CD8-positive, alpha-beta memory T cell (primary cell): ENCODE measurements at regions of chr4 and their contacts with region 1.

Region 1: GRCh38 chr4:56977321-56978012 is at the start of gene NOA1:
- DNase-seq: peak; percentile 93 to 99 (median 99)
- H3K4me3 ChIP-seq: peak within 1 kb of the TSS; percentile 89
- H3K4me3 Mint-ChIP-seq: peak within 1 kb of the TSS; percentile 96 to 100 (median 98)
- H3K27ac ChIP-seq: peak within 1 kb of the TSS; percentile 90
- H3K27ac Mint-ChIP-seq: peak within 1 kb of the TSS; percentile 96 to 100 (median 98)
- H3K4me1 ChIP-seq: peaks cover 53% of the 10 kb centered on the region
- H3K4me1 Mint-ChIP-seq: peaks cover 55 to 82% (median 58%) of the 10 kb centered on the region in 3 donors
- H3K27me3 ChIP-seq: no peaks in the 10 kb centered on the region
- H3K27me3 Mint-ChIP-seq: no peaks in the 10 kb centered on the region
- total RNA-seq, gene NOA1: 22.0 TPM

Region 2: GRCh38 chr4:55948726-55949474 is 1028.6 kb before region 1 on chr4 and contains the start of gene CEP135:
- CTCF ChIA-PET with region 1: interaction called, 10 read pairs
- POLR2A ChIA-PET with region 1: no interaction called
- DNase-seq: peak; percentile 88 to 95 (median 91)
- H3K4me3 ChIP-seq: peak within 1 kb of the TSS; percentile 87
- H3K4me3 Mint-ChIP-seq: peak within 1 kb of the TSS; percentile 86 to 97 (median 94)
- H3K27ac ChIP-seq: peak within 1 kb of the TSS; percentile 82
- H3K27ac Mint-ChIP-seq: peak within 1 kb of the TSS; percentile 71 to 98 (median 94)
- H3K4me1 ChIP-seq: peaks cover 29% of the 10 kb centered on the region
- H3K4me1 Mint-ChIP-seq: peaks cover 36 to 53% (median 52%) of the 10 kb centered on the region in 3 donors
- H3K27me3 ChIP-seq: no peaks in the 10 kb centered on the region
- H3K27me3 Mint-ChIP-seq: no peaks in the 10 kb centered on the region
- total RNA-seq, gene CEP135: 15.8 to 16.1 TPM

Region 3: GRCh38 chr4:56387023-56388001 is 590.2 kb before region 1 on chr4 and contains the start of gene AASDH:
- CTCF ChIA-PET with region 1: no interaction called
- POLR2A ChIA-PET with region 1: interaction called, 16 read pairs
- DNase-seq: peak; percentile 88 to 96 (median 94)
- H3K4me3 ChIP-seq: peak within 1 kb of the TSS; percentile 79
- H3K4me3 Mint-ChIP-seq: peak within 1 kb of the TSS; percentile 88 to 99 (median 93)
- H3K27ac ChIP-seq: peak within 1 kb of the TSS; percentile 97
- H3K27ac Mint-ChIP-seq: peak within 1 kb of the TSS; percentile 97 to 99 (median 98)
- H3K4me1 ChIP-seq: peaks cover 24% of the 10 kb centered on the region
- H3K4me1 Mint-ChIP-seq: peaks cover 39 to 50% (median 43%) of the 10 kb centered on the region in 3 donors
- H3K27me3 ChIP-seq: no peaks in the 10 kb centered on the region
- H3K27me3 Mint-ChIP-seq: no peaks in the 10 kb centered on the region
- total RNA-seq, gene AASDH: 8.5 to 13.0 TPM

Region 4: GRCh38 chr4:56907489-56908205 is 69.8 kb before region 1 on chr4 and contains the start of gene REST:
- CTCF ChIA-PET with region 1: interaction called, 51 read pairs
- POLR2A ChIA-PET with region 1: interaction called, 107 read pairs
- DNase-seq: peak; percentile 74 to 88 (median 83)
- H3K4me3 ChIP-seq: peak within 1 kb of the TSS; percentile 77
- H3K4me3 Mint-ChIP-seq: peak within 1 kb of the TSS; percentile 89 to 96 (median 93)
- H3K27ac ChIP-seq: peak within 1 kb of the TSS; percentile 81
- H3K27ac Mint-ChIP-seq: peak within 1 kb of the TSS; percentile 79 to 95 (median 94)
- H3K4me1 ChIP-seq: peaks cover 40% of the 10 kb centered on the region
- H3K4me1 Mint-ChIP-seq: peaks cover 41 to 49% (median 46%) of the 10 kb centered on the region in 3 donors
- H3K27me3 ChIP-seq: no peaks in the 10 kb centered on the region
- H3K27me3 Mint-ChIP-seq: peaks cover 0 to 5% of the 10 kb centered on the region in 2 donors
- total RNA-seq, gene REST: 45.2 to 46.6 TPM

Region 5: GRCh38 chr4:56959100-56959499 is 18.4 kb before region 1 on chr4:
- CTCF ChIA-PET with region 1: interaction called, 23 read pairs
- POLR2A ChIA-PET with region 1: interaction called, 4 read pairs
- DNase-seq: no peak
- H3K4me3 ChIP-seq: no peak overlapping the region
- H3K4me3 Mint-ChIP-seq: no peak overlapping the region
- H3K27ac ChIP-seq: no peak overlapping the region
- H3K27ac Mint-ChIP-seq: no peak overlapping the region
- H3K4me1 ChIP-seq: no peaks in the 10 kb centered on the region
- H3K4me1 Mint-ChIP-seq: no peaks in the 10 kb centered on the region
- H3K27me3 ChIP-seq: no peaks in the 10 kb centered on the region
- H3K27me3 Mint-ChIP-seq: no peaks in the 10 kb centered on the region

Region 6: DNA sequence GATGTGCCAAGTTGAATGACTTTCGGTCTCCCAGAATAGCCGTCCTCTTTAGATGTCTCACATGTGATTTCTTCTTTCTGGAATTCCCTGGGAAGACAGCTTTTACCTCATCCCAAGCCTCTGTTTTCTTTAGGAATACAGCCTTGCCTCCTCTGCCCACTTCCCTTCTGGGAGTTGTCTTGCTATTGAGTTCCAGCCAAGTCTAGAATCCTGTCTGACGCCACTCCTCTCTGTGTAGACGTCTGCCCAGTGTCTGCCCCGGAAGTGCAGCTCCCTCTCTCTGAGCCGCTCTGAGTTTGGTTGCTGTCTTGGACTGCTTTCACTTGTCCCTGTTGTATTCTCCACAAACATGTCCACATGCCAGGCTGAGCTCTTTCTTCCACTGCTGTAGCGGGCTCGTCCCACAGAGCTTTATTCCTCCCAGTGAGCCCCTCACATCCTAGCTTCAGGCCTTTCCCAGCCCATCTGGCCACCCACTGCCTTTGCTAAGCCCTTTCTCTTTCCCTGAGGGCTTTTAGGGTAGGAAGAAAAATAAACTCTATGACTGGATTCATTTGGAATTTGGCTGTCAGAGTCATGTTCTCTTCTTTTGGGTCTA is 141.7 kb after region 1 on chr4:
- CTCF ChIA-PET with region 1: no interaction called
- POLR2A ChIA-PET with region 1: no interaction called
- DNase-seq: no peak
- H3K4me3 ChIP-seq: no peak overlapping the region
- H3K4me3 Mint-ChIP-seq: no peak overlapping the region
- H3K27ac ChIP-seq: no peak overlapping the region
- H3K27ac Mint-ChIP-seq: no peak overlapping the region
- H3K4me1 ChIP-seq: no peaks in the 10 kb centered on the region
- H3K4me1 Mint-ChIP-seq: no peaks in the 10 kb centered on the region
- H3K27me3 ChIP-seq: no peaks in the 10 kb centered on the region
- H3K27me3 Mint-ChIP-seq: peaks cover 13 to 64% of the 10 kb centered on the region in 2 donors

Region 7: GRCh38 chr4:57631147-57631546 is 653.7 kb after region 1 on chr4:
- CTCF ChIA-PET with region 1: no interaction called
- POLR2A ChIA-PET with region 1: no interaction called
- DNase-seq: no peak
- H3K4me3 ChIP-seq: no peak overlapping the region
- H3K4me3 Mint-ChIP-seq: no peak overlapping the region
- H3K27ac ChIP-seq: no peak overlapping the region
- H3K27ac Mint-ChIP-seq: no peak overlapping the region
- H3K4me1 ChIP-seq: no peaks in the 10 kb centered on the region
- H3K4me1 Mint-ChIP-seq: no peaks in the 10 kb centered on the region
- H3K27me3 ChIP-seq: no peaks in the 10 kb centered on the region
- H3K27me3 Mint-ChIP-seq: no peaks in the 10 kb centered on the region